ENCODE measurements at regions of chr1 and their contacts with region 1.

Region 1: GRCh38 chr1:244272471-244273261 is 179.0 kb downstream of the ADSS2 start:
- DNase-seq: peak; percentile 58 to 89 (median 63)
- ATAC-seq: peak; percentile 96
- H3K4me3 ChIP-seq: no peak overlapping the region
- H3K4me3 Mint-ChIP-seq: no peak overlapping the region
- H3K27ac ChIP-seq: no peak overlapping the region
- H3K27ac Mint-ChIP-seq: no peak overlapping the region
- H3K4me1 ChIP-seq: no peaks in the 10 kb centered on the region
- H3K4me1 Mint-ChIP-seq: peaks cover 14% of the 10 kb centered on the region
- H3K27me3 ChIP-seq: no peaks in the 10 kb centered on the region
- H3K27me3 Mint-ChIP-seq: no peaks in the 10 kb centered on the region
- CTCF ChIP-seq: peak; percentile 99

Region 2: DNA sequence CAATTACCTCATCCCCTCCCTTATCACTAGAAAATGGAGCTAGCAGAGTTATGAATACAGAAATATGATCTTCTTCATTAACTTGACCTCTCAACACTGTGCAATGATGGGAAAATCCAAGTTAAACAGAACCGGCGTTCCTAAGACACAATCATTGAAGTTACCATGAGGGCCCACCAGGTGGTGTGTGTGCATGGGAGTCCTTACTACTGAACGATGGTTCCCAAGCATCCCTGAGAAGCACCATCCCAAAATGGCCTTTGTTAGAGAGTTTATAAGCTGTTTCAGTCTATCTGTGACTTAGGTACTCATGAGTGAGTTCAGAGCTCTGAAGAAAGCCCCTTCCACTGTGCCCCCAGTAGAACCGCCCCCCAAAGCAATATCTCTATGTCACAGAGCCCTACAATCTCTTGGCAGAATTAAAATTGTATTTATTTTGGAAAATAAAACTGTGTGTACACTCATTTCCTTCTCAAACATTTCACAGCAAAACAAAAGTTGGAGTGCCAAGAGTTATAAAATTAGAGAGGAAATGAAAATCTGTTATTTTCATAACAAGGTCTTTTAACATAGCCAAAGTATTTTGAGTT is 1805.0 kb before region 1 on chr1:
- CTCF ChIA-PET with region 1: no interaction called
- POLR2A ChIA-PET with region 1: no interaction called
- intact Hi-C with region 1: loop called in 1 of 2 experiments (anchors 5 kb)
- DNase-seq: peak in 3 of 14 experiments; percentile 18 to 27 (median 26)
- ATAC-seq: no peak
- H3K4me3 ChIP-seq: no peak overlapping the region
- H3K4me3 Mint-ChIP-seq: no peak overlapping the region
- H3K27ac ChIP-seq: no peak overlapping the region
- H3K27ac Mint-ChIP-seq: no peak overlapping the region
- H3K4me1 ChIP-seq: no peaks in the 10 kb centered on the region
- H3K4me1 Mint-ChIP-seq: no peaks in the 10 kb centered on the region
- H3K27me3 ChIP-seq: no peaks in the 10 kb centered on the region
- H3K27me3 Mint-ChIP-seq: peaks cover 17% of the 10 kb centered on the region
- CTCF ChIP-seq: peak; percentile 27

Region 3: DNA sequence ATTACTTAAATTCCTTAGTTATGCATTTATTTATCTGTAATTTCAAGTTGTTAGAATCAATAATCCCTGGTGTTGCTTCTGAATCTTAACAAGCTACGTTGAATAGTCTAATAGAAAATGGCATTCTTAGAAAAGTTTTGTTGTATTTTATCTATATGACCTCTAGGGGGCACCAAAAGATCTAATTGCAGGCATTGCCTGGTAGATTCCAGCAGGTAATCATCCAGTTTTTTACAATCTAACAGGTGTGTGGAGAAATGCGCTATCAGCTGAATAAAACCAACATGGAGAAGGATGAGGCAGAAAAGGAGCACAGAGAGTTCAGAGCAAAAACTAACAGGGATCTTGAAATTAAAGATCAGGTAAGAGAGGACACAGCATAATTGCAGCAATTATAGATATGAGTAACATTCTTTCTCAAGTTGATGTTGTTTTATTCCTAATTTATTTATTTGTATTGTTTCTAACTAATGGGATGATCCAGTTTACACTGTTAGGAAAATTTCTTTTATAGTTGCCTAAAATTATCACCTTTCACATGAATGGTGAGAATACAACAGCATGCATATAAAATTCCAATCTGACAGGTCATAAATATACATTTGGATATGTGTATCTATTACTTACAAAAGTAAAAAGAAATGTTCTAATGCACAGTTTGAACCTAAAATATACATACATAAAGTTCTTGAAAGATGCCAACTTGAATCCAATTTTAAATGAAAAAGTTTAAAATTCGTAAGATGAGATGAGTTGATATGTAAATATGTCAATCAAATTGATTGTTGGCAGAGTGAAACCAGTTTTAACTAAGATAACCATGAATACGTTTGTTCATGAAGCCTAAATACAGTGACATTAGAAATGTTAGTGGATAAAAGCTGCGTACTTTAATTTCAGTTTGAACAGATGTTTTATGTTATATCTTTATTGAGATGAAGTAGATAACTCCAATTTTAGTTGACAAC is 928.4 kb before region 1 on chr1:
- CTCF ChIA-PET with region 1: interaction called, 3 read pairs
- POLR2A ChIA-PET with region 1: no interaction called
- intact Hi-C with region 1: loop called (anchors 1 kb)
- DNase-seq: peak in 3 of 14 experiments; percentile 56 to 68 (median 64)
- ATAC-seq: peak; percentile 46
- H3K4me3 ChIP-seq: no peak overlapping the region
- H3K4me3 Mint-ChIP-seq: no peak overlapping the region
- H3K27ac ChIP-seq: no peak overlapping the region
- H3K27ac Mint-ChIP-seq: no peak overlapping the region
- H3K4me1 ChIP-seq: no peaks in the 10 kb centered on the region
- H3K4me1 Mint-ChIP-seq: peaks cover 4% of the 10 kb centered on the region
- H3K27me3 ChIP-seq: no peaks in the 10 kb centered on the region
- H3K27me3 Mint-ChIP-seq: no peaks in the 10 kb centered on the region
- CTCF ChIP-seq: peak; percentile 90

Region 4: DNA sequence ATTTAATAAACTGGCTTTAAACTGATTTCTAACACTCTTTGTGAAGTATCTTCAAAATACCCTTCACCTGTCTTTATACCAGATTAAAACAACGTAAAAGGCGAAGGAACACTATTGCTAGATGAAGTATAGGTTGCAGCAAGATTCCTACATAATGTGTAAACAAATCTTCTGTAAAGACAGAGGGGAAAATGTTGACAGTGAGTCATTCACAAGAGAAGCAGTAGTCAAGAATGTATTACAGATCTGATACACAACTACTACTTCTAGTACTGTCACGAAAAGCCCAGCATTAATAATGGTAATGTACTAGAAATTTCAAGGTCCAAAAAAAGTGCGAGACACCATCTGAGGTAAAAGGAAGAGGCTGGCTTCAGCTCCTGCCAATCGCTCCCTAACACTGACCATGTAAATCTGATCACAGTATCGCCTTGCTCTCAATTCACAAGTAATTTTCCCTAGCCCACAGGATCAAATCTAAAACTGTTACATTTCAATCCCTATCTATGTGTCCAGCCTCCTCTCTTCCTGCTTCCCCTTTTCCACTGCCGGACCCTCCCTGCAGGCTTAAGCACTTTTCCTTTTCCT is 713.0 kb before region 1 on chr1:
- CTCF ChIA-PET with region 1: no interaction called
- POLR2A ChIA-PET with region 1: no interaction called
- intact Hi-C with region 1: loop called in 1 of 2 experiments (anchors 10 kb)
- DNase-seq: no peak
- ATAC-seq: no peak
- H3K4me3 ChIP-seq: no peak overlapping the region
- H3K4me3 Mint-ChIP-seq: no peak overlapping the region
- H3K27ac ChIP-seq: no peak overlapping the region
- H3K27ac Mint-ChIP-seq: no peak overlapping the region
- H3K4me1 ChIP-seq: no peaks in the 10 kb centered on the region
- H3K4me1 Mint-ChIP-seq: no peaks in the 10 kb centered on the region
- H3K27me3 ChIP-seq: no peaks in the 10 kb centered on the region
- H3K27me3 Mint-ChIP-seq: no peaks in the 10 kb centered on the region
- CTCF ChIP-seq: no peak

Region 5: GRCh38 chr1:243708210-243708609 is 564.5 kb before region 1 on chr1:
- CTCF ChIA-PET with region 1: no interaction called
- POLR2A ChIA-PET with region 1: no interaction called
- intact Hi-C with region 1: loop called (anchors 1 to 5 kb)
- DNase-seq: peak in 3 of 14 experiments; percentile 19 to 27 (median 20)
- ATAC-seq: no peak
- H3K4me3 ChIP-seq: no peak overlapping the region
- H3K4me3 Mint-ChIP-seq: no peak overlapping the region
- H3K27ac ChIP-seq: no peak overlapping the region
- H3K27ac Mint-ChIP-seq: no peak overlapping the region
- H3K4me1 ChIP-seq: no peaks in the 10 kb centered on the region
- H3K4me1 Mint-ChIP-seq: peaks cover 32% of the 10 kb centered on the region
- H3K27me3 ChIP-seq: no peaks in the 10 kb centered on the region
- H3K27me3 Mint-ChIP-seq: no peaks in the 10 kb centered on the region
- CTCF ChIP-seq: peak; percentile 50

Region 6: DNA sequence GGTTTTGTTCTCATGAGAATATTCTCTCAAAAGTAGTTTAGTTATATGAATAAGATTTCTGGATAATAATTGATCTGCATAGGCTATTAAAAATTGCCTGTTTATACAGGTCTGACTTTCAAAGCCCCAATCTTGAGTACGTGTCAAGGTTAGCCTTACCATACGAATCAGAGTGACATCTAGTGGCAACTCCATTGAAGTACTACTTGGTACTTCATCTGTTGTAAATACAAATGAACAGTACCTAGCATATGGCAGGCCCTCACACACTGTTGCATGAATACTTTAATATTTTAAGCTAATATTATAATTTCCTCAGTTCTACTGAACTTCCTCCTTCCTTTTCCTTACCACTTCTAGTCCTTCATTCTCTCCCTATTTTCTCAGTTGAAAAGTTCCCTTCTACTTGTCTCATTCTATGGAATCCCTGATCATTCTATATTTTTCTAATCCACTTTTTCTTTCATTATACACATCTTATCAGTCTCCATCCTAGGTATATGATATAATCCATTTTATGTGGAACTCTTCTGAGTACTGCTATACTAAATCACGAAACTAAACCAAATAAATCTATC is 523.9 kb before region 1 on chr1:
- CTCF ChIA-PET with region 1: no interaction called
- POLR2A ChIA-PET with region 1: no interaction called
- intact Hi-C with region 1: loop called in 1 of 2 experiments (anchors 5 kb)
- DNase-seq: peak in 4 of 14 experiments; percentile 16 to 81 (median 72)
- ATAC-seq: peak; percentile 98
- H3K4me3 ChIP-seq: no peak overlapping the region
- H3K4me3 Mint-ChIP-seq: no peak overlapping the region
- H3K27ac ChIP-seq: no peak overlapping the region
- H3K27ac Mint-ChIP-seq: peak overlapping the region; percentile 52
- H3K4me1 ChIP-seq: peaks cover 2% of the 10 kb centered on the region
- H3K4me1 Mint-ChIP-seq: peaks cover 59% of the 10 kb centered on the region
- H3K27me3 ChIP-seq: no peaks in the 10 kb centered on the region
- H3K27me3 Mint-ChIP-seq: no peaks in the 10 kb centered on the region
- CTCF ChIP-seq: peak; percentile 83

Region 7: DNA sequence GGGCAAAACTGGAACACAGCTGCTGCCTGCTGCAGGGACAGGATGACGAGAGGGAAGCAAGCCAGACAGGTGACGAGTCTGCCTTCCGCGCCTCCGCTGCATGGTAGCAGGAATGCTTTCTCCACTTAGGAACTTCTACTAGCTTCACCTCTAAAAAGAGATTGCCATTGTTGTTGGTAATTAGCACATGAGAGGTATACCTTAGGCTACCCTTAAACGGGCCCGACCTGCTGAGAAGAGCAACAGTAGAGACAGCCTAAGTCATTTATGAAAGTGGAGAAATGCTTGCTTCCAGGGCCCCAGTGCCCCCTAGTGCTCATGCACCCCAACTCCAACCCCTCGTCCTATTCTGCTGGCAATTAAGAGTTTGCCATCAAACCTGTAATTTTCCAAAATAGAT is 325.7 kb before region 1 on chr1:
- CTCF ChIA-PET with region 1: no interaction called
- POLR2A ChIA-PET with region 1: no interaction called
- intact Hi-C with region 1: loop called (anchors 2 to 5 kb)
- DNase-seq: peak; percentile 12 to 64 (median 32)
- ATAC-seq: peak; percentile 55
- H3K4me3 ChIP-seq: no peak overlapping the region
- H3K4me3 Mint-ChIP-seq: no peak overlapping the region
- H3K27ac ChIP-seq: no peak overlapping the region
- H3K27ac Mint-ChIP-seq: no peak overlapping the region
- H3K4me1 ChIP-seq: no peaks in the 10 kb centered on the region
- H3K4me1 Mint-ChIP-seq: no peaks in the 10 kb centered on the region
- H3K27me3 ChIP-seq: no peaks in the 10 kb centered on the region
- H3K27me3 Mint-ChIP-seq: no peaks in the 10 kb centered on the region
- CTCF ChIP-seq: peak; percentile 75

Region 8: DNA sequence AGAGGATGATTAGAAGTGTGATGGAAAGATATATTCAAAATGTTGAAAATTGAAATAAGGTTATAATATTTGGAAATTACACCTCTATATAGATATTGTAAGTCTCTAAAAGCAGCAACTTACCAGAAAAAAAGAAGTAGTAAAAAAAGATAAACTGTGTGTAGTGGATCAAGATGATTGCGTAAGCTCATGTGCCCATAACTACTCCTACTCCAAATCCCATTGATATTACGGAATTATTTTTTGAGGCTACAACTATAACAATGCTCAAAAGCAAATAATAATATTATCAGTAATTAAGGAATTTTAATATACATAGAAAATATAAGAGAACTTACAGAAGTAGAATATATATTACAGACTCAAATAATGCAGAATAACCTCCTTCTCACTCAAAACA is 222.0 kb after region 1 on chr1:
- CTCF ChIA-PET with region 1: no interaction called
- POLR2A ChIA-PET with region 1: no interaction called
- intact Hi-C with region 1: no loop called
- DNase-seq: no peak
- ATAC-seq: no peak
- H3K4me3 ChIP-seq: no peak overlapping the region
- H3K4me3 Mint-ChIP-seq: no peak overlapping the region
- H3K27ac ChIP-seq: no peak overlapping the region
- H3K27ac Mint-ChIP-seq: no peak overlapping the region
- H3K4me1 ChIP-seq: no peaks in the 10 kb centered on the region
- H3K4me1 Mint-ChIP-seq: no peaks in the 10 kb centered on the region
- H3K27me3 ChIP-seq: no peaks in the 10 kb centered on the region
- H3K27me3 Mint-ChIP-seq: no peaks in the 10 kb centered on the region
- CTCF ChIP-seq: no peak